ENCODE measurements at regions of chr13 and their contacts with region 1.

Region 1: DNA sequence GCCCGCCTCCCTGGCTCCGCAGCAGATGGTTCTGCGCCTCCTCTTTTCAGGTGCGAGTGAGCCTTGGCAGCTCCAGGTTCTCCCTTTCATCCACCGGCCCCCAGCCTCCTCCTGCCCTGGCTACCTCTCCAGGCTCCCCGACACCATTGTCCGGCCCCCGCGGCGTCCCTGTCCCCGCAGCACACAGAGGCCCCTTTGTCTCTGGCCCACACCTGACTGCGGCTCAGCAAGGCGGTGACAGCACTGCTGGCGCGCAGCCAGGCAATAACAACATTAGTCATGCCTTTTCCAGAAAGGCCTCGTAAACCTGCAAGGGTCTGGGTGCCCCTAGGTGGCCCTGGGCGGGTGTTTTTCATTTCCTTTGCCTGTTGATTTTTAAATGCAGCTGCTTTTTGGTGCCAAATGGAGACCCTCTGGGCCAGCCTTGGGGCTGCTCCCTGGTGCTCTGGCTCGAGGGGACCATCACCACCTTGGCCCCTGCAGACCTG is 73.2 kb upstream of the MEDAG start:
- DNase-seq: peak; percentile 82
- H3K4me3 Mint-ChIP-seq: no peak overlapping the region
- H3K27ac Mint-ChIP-seq: no peak overlapping the region
- H3K4me1 Mint-ChIP-seq: peaks cover 5% of the 10 kb centered on the region
- H3K27me3 Mint-ChIP-seq: peaks cover 17% of the 10 kb centered on the region

Region 2: DNA sequence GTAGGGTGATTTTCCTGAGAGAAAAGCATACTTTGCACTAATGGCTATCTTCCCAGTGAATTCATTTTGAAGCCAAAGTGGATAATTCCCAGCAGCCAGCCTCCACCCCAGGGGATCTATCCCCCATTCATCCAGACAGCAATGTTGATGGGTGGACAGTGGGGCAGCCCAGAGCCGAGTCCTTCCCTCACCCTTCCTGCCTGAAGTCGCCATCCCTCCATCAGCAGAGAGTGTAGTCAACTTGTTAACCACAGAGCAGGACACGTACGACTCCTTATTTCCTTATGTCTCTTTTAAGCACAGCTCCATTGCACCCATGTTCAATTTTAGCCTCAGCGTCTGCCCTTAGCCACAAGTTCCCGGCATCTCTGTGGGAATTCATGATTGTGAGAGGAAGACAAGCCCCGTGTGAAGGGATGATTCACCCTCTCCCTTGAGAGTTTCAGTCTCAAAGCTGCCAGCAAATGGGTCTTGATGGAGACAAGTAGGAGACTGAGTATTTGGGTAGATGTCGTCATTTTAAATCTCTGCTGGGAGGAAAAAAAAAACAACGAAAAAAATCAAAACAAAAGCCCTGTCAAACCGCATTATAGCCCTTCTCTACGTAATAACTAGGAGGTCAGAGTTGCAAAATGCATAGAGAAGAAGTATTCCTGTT is 14.9 kb after region 1 on chr13:
- CTCF ChIA-PET with region 1: interaction called, 3 read pairs
- POLR2A ChIA-PET with region 1: no interaction called
- intact Hi-C with region 1: loop called (anchors 2 kb)
- DNase-seq: peak; percentile 64
- H3K4me3 Mint-ChIP-seq: no peak overlapping the region
- H3K27ac Mint-ChIP-seq: peak overlapping the region; percentile 39
- H3K4me1 Mint-ChIP-seq: peaks cover 23% of the 10 kb centered on the region
- H3K27me3 Mint-ChIP-seq: peaks cover 9% of the 10 kb centered on the region

Region 3: GRCh38 chr13:31663880-31664585 is 831.1 kb after region 1 on chr13:
- CTCF ChIA-PET with region 1: no interaction called
- POLR2A ChIA-PET with region 1: no interaction called
- intact Hi-C with region 1: no loop called
- DNase-seq: no peak
- H3K4me3 Mint-ChIP-seq: no peak overlapping the region
- H3K27ac Mint-ChIP-seq: no peak overlapping the region
- H3K4me1 Mint-ChIP-seq: no peaks in the 10 kb centered on the region
- H3K27me3 Mint-ChIP-seq: no peaks in the 10 kb centered on the region